ENCODE measurements at regions of chr4 and their contacts with region 1.

Region 1: DNA sequence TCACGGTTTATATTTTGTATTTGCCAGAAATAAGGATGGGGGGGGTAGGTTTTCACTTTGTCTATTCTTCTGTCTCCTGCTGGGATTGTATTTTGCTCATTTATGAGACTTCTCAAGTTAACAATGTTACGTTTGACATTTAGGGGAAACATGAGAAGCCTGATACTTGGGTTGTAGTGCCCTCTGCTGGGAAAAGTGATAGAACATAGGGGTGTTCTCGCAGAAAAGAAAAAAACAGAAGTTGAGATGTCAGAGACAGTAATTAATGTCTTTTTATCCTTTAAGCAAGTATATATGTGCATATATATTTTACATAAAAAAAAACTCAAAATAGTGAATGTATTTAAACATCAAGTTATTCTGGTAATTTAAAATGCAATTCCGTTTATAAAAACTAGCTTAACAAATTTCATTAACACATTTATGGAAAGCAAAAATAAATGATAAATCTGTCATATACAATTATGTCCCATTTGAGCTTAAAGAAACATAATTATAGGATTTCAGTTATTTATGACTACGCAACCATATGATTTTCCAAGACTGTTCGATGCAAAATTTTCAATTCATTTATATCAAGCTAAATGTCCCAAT is 46.0 kb upstream of the TMPRSS11F start:
- DNase-seq: peak; percentile 61
- CTCF ChIP-seq: peak; percentile 64

Region 2: GRCh38 chr4:67983333-67983732 is 192.3 kb before region 1 on chr4:
- in situ Hi-C with region 1: loop called (anchors 25 kb)
- DNase-seq: no peak
- CTCF ChIP-seq: no peak

Region 3: DNA sequence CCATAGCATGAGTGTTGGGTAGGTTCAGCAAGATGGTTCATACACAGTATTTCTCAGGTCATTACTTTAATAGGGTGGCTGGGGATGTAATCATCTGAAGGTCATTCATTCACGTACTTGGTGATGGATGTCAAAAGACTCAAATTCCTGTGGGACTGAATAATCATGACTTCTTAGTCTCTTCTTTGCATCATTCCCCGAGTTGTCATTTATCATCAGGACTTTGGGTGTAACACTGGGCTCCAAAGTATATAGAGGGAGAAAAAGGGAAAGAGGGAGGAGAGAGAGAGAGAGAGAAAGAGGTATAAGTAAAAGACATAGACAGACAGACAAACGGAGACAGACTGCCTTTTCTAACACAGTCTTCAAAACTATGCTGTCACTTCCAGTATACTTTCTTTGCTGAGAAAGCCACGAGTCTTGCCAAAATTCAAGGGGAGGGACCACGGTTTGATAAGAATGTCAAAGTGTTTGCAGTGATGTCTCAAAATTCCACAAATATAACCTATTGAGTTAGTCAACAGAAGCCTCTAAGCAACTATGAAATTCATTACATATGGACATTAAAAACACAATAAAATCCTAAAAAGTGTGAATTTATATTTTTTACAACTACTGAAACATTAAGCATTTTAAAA is 720.0 kb after region 1 on chr4:
- in situ Hi-C with region 1: no loop called
- DNase-seq: no peak
- CTCF ChIP-seq: no peak